Activated CD8-positive, alpha-beta T cell treated with anti-CD3 and anti-CD28 coated beads, Interleukin-2, amount 10 ng/mL, durations not matched to agents 7 days and 5 days (primary cell): ENCODE measurements at regions of chrX and their contacts with region 1.

Region 1: DNA sequence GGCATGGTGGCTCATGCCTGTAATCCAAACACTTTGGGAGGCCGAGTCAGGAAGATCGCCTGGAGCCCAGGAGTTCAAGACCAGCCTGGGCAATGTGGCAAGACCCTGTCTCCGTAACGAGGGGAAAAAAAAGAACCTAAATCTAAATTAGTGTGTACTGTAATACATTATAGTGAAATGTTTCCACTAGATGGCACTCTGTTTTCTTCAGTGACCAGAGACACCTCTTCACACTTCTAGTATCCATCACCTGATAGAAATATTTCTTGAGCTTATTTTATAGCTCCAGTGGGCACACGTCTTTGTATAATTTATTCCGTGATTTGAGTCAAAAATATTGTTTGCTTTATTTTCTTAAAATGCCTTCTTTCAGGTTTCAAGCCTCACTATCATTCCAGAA is 600.9 kb upstream of the DIPK2B start:
- DNase-seq: no peak
- ATAC-seq: peak; percentile 67
- H3K4me3 Mint-ChIP-seq: no peak overlapping the region
- H3K27ac Mint-ChIP-seq: no peak overlapping the region
- H3K4me1 Mint-ChIP-seq: peaks cover 69% of the 10 kb centered on the region
- H3K27me3 Mint-ChIP-seq: no peaks in the 10 kb centered on the region

Region 2: DNA sequence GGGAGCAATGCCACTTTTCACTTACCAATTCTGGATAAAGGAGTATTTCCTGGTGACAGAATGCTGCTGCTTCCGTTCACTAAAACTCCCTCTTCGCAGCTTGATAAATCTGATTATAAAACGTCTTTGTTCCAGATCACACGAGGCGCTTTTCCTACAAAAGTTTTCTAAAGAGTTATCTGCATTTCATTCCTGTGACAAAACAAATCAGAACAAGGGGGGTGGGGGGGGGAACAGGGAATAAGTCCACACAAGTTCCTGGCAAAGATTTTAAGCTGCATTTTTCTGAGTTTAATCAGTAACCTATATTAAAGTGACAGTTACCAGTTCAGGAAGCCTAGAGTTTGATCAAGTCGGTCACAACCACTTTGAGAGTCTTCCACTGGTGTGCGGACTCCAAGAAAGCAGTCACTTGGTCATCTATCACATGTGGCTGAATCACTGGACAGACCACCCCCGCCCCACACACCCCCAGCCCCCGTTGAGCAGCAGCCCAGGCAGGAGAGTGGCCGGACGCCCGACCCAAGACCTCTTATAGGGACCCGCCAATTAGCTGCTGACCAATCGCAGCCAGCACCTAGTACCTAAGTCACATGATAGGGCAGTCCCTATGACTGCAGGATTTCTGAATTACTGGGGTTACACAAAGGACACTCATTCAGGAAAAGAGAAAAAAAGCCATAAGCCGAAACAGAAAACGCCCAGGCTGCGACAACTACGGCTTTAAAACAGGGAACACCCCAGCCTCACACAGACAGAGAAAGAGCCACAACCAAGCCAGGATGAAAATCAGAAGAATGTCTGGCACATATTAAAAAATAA is 31.6 kb before region 1 on chrX:
- CTCF ChIA-PET with region 1: interaction called, 20 read pairs
- POLR2A ChIA-PET with region 1: interaction called, 27 read pairs
- DNase-seq: peak; percentile 69
- ATAC-seq: peak; percentile 67
- H3K4me3 Mint-ChIP-seq: peak overlapping the region; percentile 85
- H3K27ac Mint-ChIP-seq: peak overlapping the region; percentile 91
- H3K4me1 Mint-ChIP-seq: peaks cover 54% of the 10 kb centered on the region
- H3K27me3 Mint-ChIP-seq: no peaks in the 10 kb centered on the region

Region 3: GRCh38 chrX:45843518-45843917 is 42.0 kb after region 1 on chrX:
- CTCF ChIA-PET with region 1: interaction called, 68 read pairs
- POLR2A ChIA-PET with region 1: interaction called, 3 read pairs
- DNase-seq: peak; percentile 33
- ATAC-seq: no peak
- H3K4me3 Mint-ChIP-seq: no peak overlapping the region
- H3K27ac Mint-ChIP-seq: no peak overlapping the region
- H3K4me1 Mint-ChIP-seq: peaks cover 44% of the 10 kb centered on the region
- H3K27me3 Mint-ChIP-seq: no peaks in the 10 kb centered on the region

Region 4: DNA sequence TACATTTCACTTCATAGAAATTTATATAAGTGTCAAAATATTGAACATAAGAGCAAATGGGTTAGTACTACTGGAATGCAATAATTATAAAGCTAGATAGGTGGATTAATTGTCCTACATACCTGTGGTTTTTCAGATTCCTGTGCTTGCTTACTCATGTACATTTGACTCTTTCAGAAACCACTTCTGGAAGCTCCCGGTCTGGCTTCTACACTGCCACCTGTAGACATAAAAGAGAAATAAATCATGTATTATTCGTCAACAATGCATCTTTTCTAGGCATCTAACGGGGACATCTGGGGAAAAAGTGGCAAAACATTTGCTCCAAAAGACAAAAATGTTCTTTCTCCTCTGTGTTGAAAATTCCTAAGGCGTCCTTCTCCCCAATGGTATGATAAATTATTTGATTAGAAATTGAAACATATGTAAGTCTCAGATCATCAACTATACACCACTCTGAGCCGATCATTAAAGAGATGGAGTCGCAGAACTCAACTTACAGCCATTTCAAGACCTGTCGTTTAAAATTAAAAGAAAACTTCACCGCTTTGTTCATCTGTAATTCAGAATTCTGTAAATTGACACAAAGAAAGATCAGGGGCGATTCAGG is 47.8 kb after region 1 on chrX:
- CTCF ChIA-PET with region 1: interaction called, 68 read pairs
- POLR2A ChIA-PET with region 1: interaction called, 12 read pairs
- DNase-seq: peak; percentile 38
- ATAC-seq: no peak
- H3K4me3 Mint-ChIP-seq: peak overlapping the region; percentile 93
- H3K27ac Mint-ChIP-seq: peak overlapping the region; percentile 41
- H3K4me1 Mint-ChIP-seq: peaks cover 41% of the 10 kb centered on the region
- H3K27me3 Mint-ChIP-seq: no peaks in the 10 kb centered on the region

Region 5: DNA sequence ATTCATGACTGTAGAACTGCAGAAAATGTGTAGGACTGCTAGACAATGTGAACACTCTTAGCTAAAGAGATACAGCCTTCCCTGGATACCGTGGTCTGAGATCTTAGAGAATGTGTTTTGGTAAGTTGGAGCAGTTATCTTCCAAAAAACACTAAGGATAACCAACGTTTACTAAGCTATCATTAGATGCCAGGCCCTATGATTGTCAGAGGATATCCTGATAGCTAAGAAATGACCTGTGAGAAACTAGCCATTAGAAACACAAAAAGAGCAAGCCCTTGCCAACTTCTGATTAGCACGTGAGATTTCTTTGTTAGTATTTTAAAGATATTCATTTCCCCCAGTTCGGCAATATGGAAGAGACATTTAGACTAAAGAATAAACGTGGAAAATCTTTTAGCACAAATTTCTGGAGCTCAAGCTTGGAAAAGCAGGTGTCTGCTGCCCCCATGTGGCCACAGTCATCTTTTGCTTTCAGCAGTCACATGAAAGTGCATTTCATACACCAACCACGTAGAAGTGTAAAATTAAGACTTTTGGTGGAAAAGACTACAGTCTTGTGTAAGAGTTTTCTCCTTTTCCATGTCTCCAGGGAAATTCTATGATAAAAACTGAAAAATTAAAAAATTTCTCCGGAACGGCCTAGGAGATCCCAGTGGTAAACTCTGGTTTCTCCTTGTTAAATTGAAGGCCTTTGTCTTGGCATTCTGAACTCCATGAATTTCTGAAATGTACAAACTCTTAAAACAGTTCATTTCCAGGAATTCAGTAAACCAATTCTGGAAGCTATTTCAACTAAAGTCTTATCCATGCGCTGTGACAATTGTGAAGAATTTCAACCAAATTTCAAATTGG is 607.2 kb after region 1 on chrX:
- CTCF ChIA-PET with region 1: interaction called, 16 read pairs
- POLR2A ChIA-PET with region 1: no interaction called
- DNase-seq: peak; percentile 68
- ATAC-seq: no peak
- H3K4me3 Mint-ChIP-seq: no peak overlapping the region
- H3K27ac Mint-ChIP-seq: no peak overlapping the region
- H3K4me1 Mint-ChIP-seq: no peaks in the 10 kb centered on the region
- H3K27me3 Mint-ChIP-seq: peaks cover 4% of the 10 kb centered on the region